ENCODE measurements at regions of chr9 and their contacts with region 1.

Region 1: GRCh38 chr9:131678499-131679111 is 61.3 kb downstream of the RAPGEF1 start:
- DNase-seq: peak; percentile 90

Region 2: DNA sequence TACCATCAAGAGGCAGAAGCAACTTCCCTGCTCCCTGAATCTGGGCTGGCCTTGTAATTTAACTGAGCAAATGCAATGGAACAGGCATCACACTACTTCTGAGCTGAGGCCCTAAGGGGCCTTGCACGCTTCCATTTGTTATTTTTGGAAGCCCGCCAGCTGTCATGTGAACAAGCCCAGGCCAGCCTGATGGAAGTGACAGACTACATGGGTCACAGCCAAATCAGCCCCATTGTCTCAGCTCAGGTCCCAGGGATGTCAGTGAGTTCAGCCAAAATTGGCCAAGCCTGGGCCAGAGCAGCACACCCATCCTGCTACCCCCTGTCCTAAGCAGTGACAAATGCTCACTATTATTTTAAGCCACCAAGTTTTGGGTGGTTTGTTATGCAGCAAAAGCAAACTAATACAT is 60.5 kb before region 1 on chr9:
- intact Hi-C with region 1: loop called in 1 of 2 experiments (anchors 10 kb)
- DNase-seq: no peak

Measured in posterior vena cava (tissue), 2 donors.